AG04449 (cell line): ENCODE measurements at regions of chr1 and their contacts with region 1.

Region 1: GRCh38 chr1:18926315-18927081 is 24.1 kb upstream of the ALDH4A1 start:
- DNase-seq: no peak
- H3K4me3 ChIP-seq: peak overlapping the region; percentile 28
- CTCF ChIP-seq: no peak

Region 2: GRCh38 chr1:18618546-18619466 is 307.7 kb before region 1 on chr1:
- CTCF ChIA-PET with region 1: no interaction called
- POLR2A ChIA-PET with region 1: no interaction called
- DNase-seq: no peak
- H3K4me3 ChIP-seq: no peak overlapping the region
- CTCF ChIP-seq: no peak

Region 3: GRCh38 chr1:18941221-18942141 is 15.0 kb after region 1 on chr1:
- CTCF ChIA-PET with region 1: interaction called, 21 read pairs
- POLR2A ChIA-PET with region 1: interaction called, 3 read pairs
- DNase-seq: no peak
- H3K4me3 ChIP-seq: no peak overlapping the region
- CTCF ChIP-seq: no peak

Region 4: GRCh38 chr1:18949686-18950400 is 23.3 kb after region 1 on chr1:
- CTCF ChIA-PET with region 1: interaction called, 21 read pairs
- POLR2A ChIA-PET with region 1: interaction called, 11 read pairs
- DNase-seq: no peak
- H3K4me3 ChIP-seq: peak overlapping the region; percentile 49
- CTCF ChIP-seq: peak; percentile 29

Region 5: GRCh38 chr1:19029191-19030105 is 103.0 kb after region 1 on chr1:
- CTCF ChIA-PET with region 1: no interaction called
- POLR2A ChIA-PET with region 1: no interaction called
- DNase-seq: no peak
- H3K4me3 ChIP-seq: no peak overlapping the region
- CTCF ChIP-seq: no peak

Region 6: GRCh38 chr1:19113697-19114092 is 187.2 kb after region 1 on chr1:
- CTCF ChIA-PET with region 1: interaction called, 12 read pairs
- POLR2A ChIA-PET with region 1: no interaction called
- DNase-seq: no peak
- H3K4me3 ChIP-seq: no peak overlapping the region
- CTCF ChIP-seq: peak; percentile 64